CD4-positive, alpha-beta memory T cell (primary cell): ENCODE measurements at regions of chr17 and their contacts with region 1.

Region 1: GRCh38 chr17:7045909-7046724 is 2.2 kb upstream of the SLC16A11 start:
- DNase-seq: peak; percentile 60 to 79 (median 74)
- H3K4me3 ChIP-seq: peak overlapping the region; percentile 67 to 84
- H3K4me3 Mint-ChIP-seq: peak overlapping the region; percentile 83 to 94 (median 90)
- H3K27ac ChIP-seq: peak overlapping the region; percentile 76
- H3K27ac Mint-ChIP-seq: peak overlapping the region; percentile 88 to 98 (median 95)
- H3K4me1 ChIP-seq: peaks cover 47% of the 10 kb centered on the region
- H3K4me1 Mint-ChIP-seq: peaks cover 15 to 54% (median 27%) of the 10 kb centered on the region in 4 donors
- H3K27me3 ChIP-seq: no peaks in the 10 kb centered on the region
- H3K27me3 Mint-ChIP-seq: peaks cover 2% of the 10 kb centered on the region in 2 donors

Region 2: DNA sequence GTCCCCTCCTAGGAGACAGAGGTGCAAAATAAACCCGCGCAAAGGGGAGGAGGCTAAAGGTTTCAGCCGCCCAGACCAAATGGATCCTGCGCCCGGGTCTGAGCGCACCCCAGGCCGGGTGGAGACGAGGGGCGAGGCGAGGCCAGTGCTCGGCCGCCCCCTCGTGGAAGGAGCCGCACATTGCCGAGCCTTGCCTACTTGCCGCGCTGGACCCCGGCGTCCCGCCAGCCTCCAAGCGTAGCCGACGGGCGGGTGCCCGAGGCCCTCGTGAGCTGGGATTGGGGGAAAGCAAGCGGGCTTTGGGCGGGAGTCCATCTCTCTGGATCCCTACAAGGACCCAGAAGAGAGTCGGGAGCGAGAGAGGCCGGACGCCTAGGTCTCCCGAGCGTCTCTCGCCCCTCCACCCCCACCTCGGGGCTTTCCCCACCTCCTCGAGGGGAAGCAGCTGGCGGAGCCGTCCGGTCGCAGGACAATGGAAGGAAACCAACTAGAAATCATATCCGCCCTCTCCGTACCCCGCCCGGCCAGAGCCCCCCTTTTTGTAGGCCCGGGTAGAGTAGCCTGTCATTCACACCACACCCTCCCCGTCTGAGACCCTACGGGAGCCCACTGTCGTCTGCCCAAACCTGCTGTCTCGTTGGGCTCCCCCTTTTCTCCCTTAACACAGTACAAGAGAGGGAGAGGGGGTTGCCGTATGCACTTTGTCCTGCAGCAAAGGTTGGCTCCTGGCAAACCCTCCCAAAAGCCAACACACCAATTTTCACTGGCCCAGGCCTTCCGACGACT is 23.9 kb before region 1 on chr17:
- CTCF ChIA-PET with region 1: interaction called, 17 read pairs
- POLR2A ChIA-PET with region 1: interaction called, 10 read pairs
- intact Hi-C with region 1: no loop called
- DNase-seq: peak; percentile 73 to 79 (median 74)
- H3K4me3 ChIP-seq: peak overlapping the region; percentile 6 to 37
- H3K4me3 Mint-ChIP-seq: peak overlapping the region; percentile 63 to 88 (median 76)
- H3K27ac ChIP-seq: no peak overlapping the region
- H3K27ac Mint-ChIP-seq: peak overlapping the region; percentile 81 to 97 (median 91)
- H3K4me1 ChIP-seq: peaks cover 42% of the 10 kb centered on the region
- H3K4me1 Mint-ChIP-seq: peaks cover 21 to 60% (median 38%) of the 10 kb centered on the region in 4 donors
- H3K27me3 ChIP-seq: no peaks in the 10 kb centered on the region
- H3K27me3 Mint-ChIP-seq: peaks cover 0 to 3% of the 10 kb centered on the region in 2 donors

Region 3: DNA sequence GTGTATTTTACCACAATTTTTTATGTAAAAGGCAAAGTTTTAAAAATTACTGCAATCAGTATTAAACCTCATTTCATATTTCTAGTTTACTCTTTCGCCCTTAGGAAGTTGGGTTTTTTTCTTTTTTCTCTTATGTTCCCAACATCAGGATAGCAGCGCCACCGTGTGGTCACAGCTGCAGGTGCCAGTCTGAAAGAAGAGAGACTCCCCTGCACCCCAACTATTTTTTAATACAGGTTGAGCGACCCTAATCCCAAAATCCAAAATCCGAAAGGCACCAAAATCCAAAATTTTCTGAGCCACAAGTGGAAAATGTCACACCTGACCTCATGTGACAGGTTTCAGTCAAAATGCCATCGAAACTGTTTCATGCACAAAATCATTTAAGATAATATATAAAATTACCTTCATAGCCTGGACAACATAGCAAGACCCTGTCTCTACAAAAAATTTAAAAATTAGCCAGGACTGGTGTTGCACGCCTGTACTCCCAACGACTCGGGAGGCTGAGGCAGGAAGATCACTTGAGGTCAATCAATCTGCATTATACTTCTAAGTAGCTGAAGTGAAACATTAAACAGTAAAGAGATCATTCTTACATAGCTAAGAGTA is 90.3 kb after region 1 on chr17:
- CTCF ChIA-PET with region 1: interaction called, 430 read pairs
- POLR2A ChIA-PET with region 1: interaction called, 41 read pairs
- intact Hi-C with region 1: loop called (anchors 1 kb)
- DNase-seq: peak; percentile 65 to 78 (median 70)
- H3K4me3 ChIP-seq: no peak overlapping the region
- H3K4me3 Mint-ChIP-seq: peak overlapping the region in 1 of 8 donors; percentile 53
- H3K27ac ChIP-seq: no peak overlapping the region
- H3K27ac Mint-ChIP-seq: peak overlapping the region in 4 of 7 donors; percentile 0 to 68 (median 36)
- H3K4me1 ChIP-seq: peaks cover 22% of the 10 kb centered on the region
- H3K4me1 Mint-ChIP-seq: peaks cover 14 to 25% (median 21%) of the 10 kb centered on the region in 4 donors
- H3K27me3 ChIP-seq: no peaks in the 10 kb centered on the region
- H3K27me3 Mint-ChIP-seq: peaks cover 5 to 11% of the 10 kb centered on the region in 2 donors

Region 4: DNA sequence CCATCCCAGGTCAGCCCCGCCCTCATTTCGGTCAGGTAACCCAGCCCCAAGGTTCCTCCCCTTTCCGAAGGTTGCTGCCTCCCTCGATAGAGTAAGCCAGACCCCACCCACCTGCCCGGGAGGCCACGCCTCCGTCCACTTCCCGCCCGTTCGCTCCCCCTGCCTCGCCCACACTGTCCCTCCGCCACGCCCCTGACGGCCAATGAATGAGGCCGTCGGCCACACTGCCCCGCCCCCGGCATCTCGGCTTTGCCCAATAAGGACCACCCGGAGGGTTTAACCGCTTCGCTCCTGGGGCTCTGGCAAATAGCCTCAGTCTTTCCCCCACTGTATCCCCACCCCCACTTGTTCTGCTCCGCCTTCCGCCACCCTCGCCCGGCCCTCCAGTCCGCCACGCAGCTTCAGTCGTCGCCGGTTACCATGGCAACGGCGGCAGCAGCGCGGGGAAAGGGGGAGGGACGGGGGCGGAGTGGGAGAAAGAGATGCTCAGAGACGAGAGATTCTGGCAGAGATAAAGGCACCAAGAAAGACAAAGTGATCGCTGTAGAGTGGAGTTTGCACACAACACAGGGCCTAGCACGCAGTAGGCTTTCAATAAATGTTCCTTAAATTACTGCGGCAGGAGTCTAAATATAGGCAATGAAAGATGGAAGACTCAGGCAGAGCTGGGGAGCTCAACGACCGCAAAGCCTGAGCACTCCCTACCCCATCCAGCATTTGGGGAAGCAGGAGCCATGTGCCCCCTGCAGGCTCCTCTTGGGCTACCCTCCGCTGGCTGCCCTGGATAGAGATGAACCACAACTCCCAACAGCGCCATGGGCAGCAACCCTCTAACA is 168.4 kb after region 1 on chr17:
- CTCF ChIA-PET with region 1: interaction called, 11 read pairs
- POLR2A ChIA-PET with region 1: interaction called, 10 read pairs
- intact Hi-C with region 1: loop called (anchors 2 kb)
- DNase-seq: peak; percentile 97 to 99 (median 98)
- H3K4me3 ChIP-seq: peak overlapping the region; percentile 68 to 73
- H3K4me3 Mint-ChIP-seq: peak overlapping the region; percentile 90 to 98 (median 93)
- H3K27ac ChIP-seq: peak overlapping the region; percentile 96
- H3K27ac Mint-ChIP-seq: peak overlapping the region; percentile 98 to 100 (median 100)
- H3K4me1 ChIP-seq: peaks cover 54% of the 10 kb centered on the region
- H3K4me1 Mint-ChIP-seq: peaks cover 26 to 67% (median 43%) of the 10 kb centered on the region in 4 donors
- H3K27me3 ChIP-seq: no peaks in the 10 kb centered on the region
- H3K27me3 Mint-ChIP-seq: peaks cover 0 to 13% of the 10 kb centered on the region in 2 donors

Region 5: DNA sequence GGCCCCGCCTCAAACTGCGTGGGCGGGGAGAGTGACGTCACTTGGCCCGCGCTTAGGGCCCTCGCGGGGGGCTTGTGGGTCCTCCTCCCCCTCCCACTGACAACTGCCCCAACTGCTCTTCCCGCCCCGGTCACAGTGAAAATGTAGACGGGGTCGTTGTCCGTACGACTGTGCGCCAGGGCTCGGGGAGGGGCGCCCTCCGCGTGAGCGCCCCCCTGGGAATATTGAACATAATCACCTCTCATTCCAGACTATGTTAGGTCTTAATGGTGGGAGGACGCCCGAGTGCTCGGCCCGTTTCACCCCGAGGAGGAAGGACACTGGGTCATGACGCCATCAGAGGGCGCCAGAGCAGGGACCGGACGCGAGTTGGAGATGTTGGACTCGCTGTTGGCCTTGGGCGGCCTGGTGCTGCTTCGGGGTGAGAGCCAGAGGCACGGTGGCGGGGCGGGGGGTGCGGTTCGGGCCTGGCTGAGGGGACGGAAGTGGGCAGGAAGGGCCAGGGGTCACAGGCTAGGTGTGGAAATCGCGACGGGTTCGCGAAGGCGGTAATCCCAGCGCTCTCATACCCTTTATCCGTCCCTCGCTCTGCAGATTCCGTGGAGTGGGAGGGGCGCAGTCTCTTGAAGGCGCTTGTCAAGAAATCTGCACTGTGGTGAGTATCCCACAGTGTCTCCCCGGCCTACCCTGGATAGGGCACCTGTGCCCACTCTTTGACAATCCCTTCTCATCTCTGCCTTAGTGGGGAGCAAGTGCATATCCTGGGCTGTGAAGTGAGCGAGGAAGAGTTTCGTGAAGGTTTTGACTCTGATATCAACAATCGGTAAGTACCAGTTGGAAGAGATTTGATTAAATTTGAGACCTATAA is 206.3 kb after region 1 on chr17 and contains the start of gene ELP5:
- CTCF ChIA-PET with region 1: interaction called, 3 read pairs
- POLR2A ChIA-PET with region 1: interaction called, 3 read pairs
- intact Hi-C with region 1: loop called (anchors 5 kb)
- DNase-seq: peak in 4 of 5 donors; percentile 86 to 92 (median 88)
- H3K4me3 ChIP-seq: peak within 1 kb of the TSS; percentile 71 to 92
- H3K4me3 Mint-ChIP-seq: peak within 1 kb of the TSS; percentile 91 to 97 (median 95)
- H3K27ac ChIP-seq: peak within 1 kb of the TSS; percentile 98
- H3K27ac Mint-ChIP-seq: peak within 1 kb of the TSS; percentile 98 to 100 (median 99)
- H3K4me1 ChIP-seq: peaks cover 37% of the 10 kb centered on the region
- H3K4me1 Mint-ChIP-seq: peaks cover 25 to 49% (median 38%) of the 10 kb centered on the region in 4 donors
- H3K27me3 ChIP-seq: no peaks in the 10 kb centered on the region
- H3K27me3 Mint-ChIP-seq: no peaks in the 10 kb centered on the region
- total RNA-seq, gene ELP5: 29.8 to 30.9 TPM

Region 6: DNA sequence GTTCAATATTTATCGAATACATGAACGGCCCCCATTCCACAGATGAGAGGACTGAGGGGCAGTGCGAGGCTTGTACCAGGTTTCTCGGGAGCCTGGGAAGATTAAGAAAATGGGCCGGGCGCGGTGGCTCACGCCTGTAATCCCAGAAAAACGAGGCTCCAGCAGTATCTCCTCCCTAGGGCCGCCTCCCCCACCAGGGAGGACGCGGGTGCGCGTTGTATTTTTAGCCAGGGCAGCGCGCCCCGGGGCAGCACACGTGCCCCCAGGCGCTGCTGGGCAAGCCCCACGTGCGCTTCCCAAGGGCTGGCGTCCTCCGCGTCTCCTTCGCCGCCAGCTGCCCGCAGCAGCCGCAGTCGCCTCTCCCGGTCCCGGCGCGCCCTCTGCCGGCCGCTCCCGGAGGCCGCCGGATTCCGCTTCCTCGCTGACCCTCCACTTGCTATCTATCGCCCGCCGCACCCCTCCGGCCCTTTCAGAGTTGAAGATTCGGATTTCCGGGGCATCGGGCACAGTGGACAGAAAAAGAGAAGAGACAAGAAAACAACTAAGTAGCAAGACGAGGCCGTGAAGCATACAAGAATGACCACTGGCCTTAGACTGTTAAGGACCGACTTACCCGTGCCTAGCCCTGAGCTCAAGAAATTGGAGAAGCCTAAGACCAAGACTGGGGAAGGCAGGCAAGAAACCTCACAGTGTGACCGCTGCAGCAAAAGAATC is 250.2 kb after region 1 on chr17:
- CTCF ChIA-PET with region 1: interaction called, 19 read pairs
- POLR2A ChIA-PET with region 1: interaction called, 10 read pairs
- intact Hi-C with region 1: loop called (anchors 1 kb)
- DNase-seq: peak; percentile 41 to 62 (median 51)
- H3K4me3 ChIP-seq: no peak overlapping the region
- H3K4me3 Mint-ChIP-seq: peak overlapping the region in 6 of 8 donors; percentile 8 to 86 (median 50)
- H3K27ac ChIP-seq: no peak overlapping the region
- H3K27ac Mint-ChIP-seq: peak overlapping the region in 3 of 7 donors; percentile 55 to 60 (median 59)
- H3K4me1 ChIP-seq: peaks cover 26% of the 10 kb centered on the region
- H3K4me1 Mint-ChIP-seq: peaks cover 7 to 31% (median 18%) of the 10 kb centered on the region in 4 donors
- H3K27me3 ChIP-seq: no peaks in the 10 kb centered on the region
- H3K27me3 Mint-ChIP-seq: peaks cover 2 to 19% of the 10 kb centered on the region in 2 donors